CD14-positive monocyte (primary cell): ENCODE measurements at regions of chr6 and their contacts with region 1.

Region 1: DNA sequence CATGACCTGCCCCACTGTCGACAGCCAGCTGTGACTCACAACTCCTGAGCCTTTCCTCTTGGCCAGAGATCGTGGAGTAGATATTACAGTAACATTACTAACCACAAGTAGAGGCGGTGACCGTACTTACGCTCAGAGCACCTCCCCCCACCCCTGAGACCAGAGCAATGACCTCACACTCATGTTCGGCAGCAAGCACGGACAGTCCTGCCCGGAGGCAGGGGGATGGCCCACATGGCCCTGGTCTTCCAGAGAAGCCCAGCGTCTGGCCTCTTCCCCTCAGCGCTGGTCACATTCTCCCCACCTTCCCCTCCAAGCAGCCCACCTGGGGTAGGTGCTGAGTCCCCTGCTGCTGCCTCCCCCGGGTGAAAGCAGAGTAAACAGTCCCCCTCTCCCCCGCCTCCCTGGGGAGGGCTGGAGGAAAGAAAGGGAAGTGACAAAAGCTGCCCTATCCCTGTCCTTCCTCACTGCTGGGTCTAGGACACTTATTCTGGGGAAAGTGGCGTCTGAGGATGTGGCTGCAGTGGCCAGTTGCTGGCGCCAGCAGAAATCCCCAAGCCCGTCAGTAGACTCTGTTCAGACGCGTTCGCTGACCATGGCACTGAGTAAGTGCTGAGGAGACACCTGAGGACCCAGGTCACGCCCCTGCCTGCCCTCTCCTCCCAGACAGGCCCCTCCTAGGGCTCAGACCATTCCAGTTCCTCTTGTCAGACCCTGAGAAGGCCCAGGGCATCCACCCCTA is 68.5 kb downstream of the MRPL14 start:
- DNase-seq: peak; percentile 98 to 100 (median 99)
- H3K4me3 ChIP-seq: peak overlapping the region in 2 of 3 experiments; percentile 26 to 34
- H3K4me3 Mint-ChIP-seq: peak overlapping the region; percentile 71 to 83
- H3K27ac ChIP-seq: peak overlapping the region; percentile 99
- H3K27ac Mint-ChIP-seq: peak overlapping the region; percentile 99 to 100 (median 100)
- H3K4me1 ChIP-seq: peaks cover 58 to 70% of the 10 kb centered on the region in 2 donors
- H3K4me1 Mint-ChIP-seq: peaks cover 75% of the 10 kb centered on the region
- H3K27me3 ChIP-seq: no peaks in the 10 kb centered on the region
- H3K27me3 Mint-ChIP-seq: peaks cover 0 to 10% (median 3%) of the 10 kb centered on the region in 3 donors
- CTCF ChIP-seq: no peak

Region 2: GRCh38 chr6:44010411-44011349 is 48.1 kb before region 1 on chr6:
- intact Hi-C with region 1: loop called in 1 of 2 experiments (anchors 5 kb)
- DNase-seq: peak; percentile 72 to 82 (median 80)
- H3K4me3 ChIP-seq: no peak overlapping the region
- H3K4me3 Mint-ChIP-seq: peak overlapping the region in 1 of 2 donors; percentile 67
- H3K27ac ChIP-seq: peak overlapping the region in 1 of 2 donors; percentile 62
- H3K27ac Mint-ChIP-seq: peak overlapping the region in 5 of 7 donors; percentile 73 to 87 (median 83)
- H3K4me1 ChIP-seq: peaks cover 22 to 43% of the 10 kb centered on the region in 2 donors
- H3K4me1 Mint-ChIP-seq: peaks cover 34% of the 10 kb centered on the region
- H3K27me3 ChIP-seq: peaks cover 0 to 26% of the 10 kb centered on the region in 2 donors
- H3K27me3 Mint-ChIP-seq: peaks cover 15 to 36% (median 28%) of the 10 kb centered on the region in 3 donors
- CTCF ChIP-seq: no peak